Caco-2 (cell line): ENCODE measurements at regions of chr1 and their contacts with region 1.

Region 1: DNA sequence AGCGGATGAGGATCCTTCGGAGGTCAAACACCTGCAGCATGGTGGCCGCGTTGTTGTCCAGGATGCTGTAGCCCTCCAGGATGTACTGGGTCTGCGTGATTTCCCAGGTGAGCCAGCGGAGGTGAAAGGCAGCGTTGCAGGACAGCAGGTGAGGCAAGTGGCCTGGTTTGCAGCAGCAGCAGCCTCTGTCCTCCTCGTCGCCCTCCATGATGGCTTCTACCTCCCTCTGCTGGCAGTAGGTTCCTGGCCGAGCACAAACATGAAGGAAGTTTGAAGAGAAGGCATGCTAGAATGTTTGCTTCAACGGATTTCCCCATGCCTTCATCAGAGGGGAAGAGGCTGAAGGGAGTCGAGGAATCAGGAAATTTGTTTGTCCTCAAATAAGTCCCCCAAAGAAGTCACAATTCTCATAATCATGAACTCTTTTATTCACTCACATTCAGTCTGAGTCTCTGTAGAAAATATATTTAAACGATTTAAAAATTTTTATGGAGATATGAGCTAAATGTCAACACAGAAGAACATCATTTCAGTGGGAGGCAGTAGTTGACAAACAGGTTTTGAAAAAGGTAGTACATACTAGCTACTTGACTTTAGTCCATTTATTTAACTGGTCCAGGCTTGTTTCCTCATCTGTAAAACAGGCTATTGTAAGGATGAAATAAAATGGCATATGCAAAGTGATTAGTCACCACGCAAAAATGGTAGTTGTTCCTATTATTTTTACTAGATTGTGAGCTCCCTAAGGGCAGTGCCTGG is 74.9 kb downstream of the NTPCR start:
- DNase-seq: peak; percentile 82 to 83
- H3K4me3 ChIP-seq: no peak overlapping the region
- H3K4me3 Mint-ChIP-seq: no peak overlapping the region
- H3K27ac Mint-ChIP-seq: no peak overlapping the region
- H3K4me1 ChIP-seq: peaks cover 6% of the 10 kb centered on the region; the same call in 1 of the 2 replicates
- H3K4me1 Mint-ChIP-seq: peaks cover 23% of the 10 kb centered on the region
- H3K27me3 ChIP-seq: no peaks in the 10 kb centered on the region
- H3K27me3 Mint-ChIP-seq: peaks cover 7% of the 10 kb centered on the region
- CTCF ChIP-seq: peak; percentile 74 to 94

Region 2: GRCh38 chr1:232635778-232636356 is 389.5 kb before region 1 on chr1:
- CTCF ChIA-PET with region 1: no interaction called
- POLR2A ChIA-PET with region 1: no interaction called
- intact Hi-C with region 1: loop called (anchors 1 kb)
- DNase-seq: peak in 1 of 2 experiments; percentile 23
- H3K4me3 ChIP-seq: no peak overlapping the region
- H3K4me3 Mint-ChIP-seq: no peak overlapping the region
- H3K27ac Mint-ChIP-seq: no peak overlapping the region
- H3K4me1 ChIP-seq: peaks cover 5% of the 10 kb centered on the region; the same call in 1 of the 2 replicates
- H3K4me1 Mint-ChIP-seq: no peaks in the 10 kb centered on the region
- H3K27me3 ChIP-seq: no peaks in the 10 kb centered on the region; the same call in 1 of the 2 replicates
- H3K27me3 Mint-ChIP-seq: no peaks in the 10 kb centered on the region
- CTCF ChIP-seq: peak; percentile 63 to 65

Region 3: GRCh38 chr1:232968965-232969364 is 56.4 kb before region 1 on chr1:
- CTCF ChIA-PET with region 1: no interaction called
- POLR2A ChIA-PET with region 1: no interaction called
- intact Hi-C with region 1: loop called (anchors 5 kb)
- DNase-seq: no peak
- H3K4me3 ChIP-seq: no peak overlapping the region
- H3K4me3 Mint-ChIP-seq: no peak overlapping the region
- H3K27ac Mint-ChIP-seq: no peak overlapping the region
- H3K4me1 ChIP-seq: no peaks in the 10 kb centered on the region
- H3K4me1 Mint-ChIP-seq: no peaks in the 10 kb centered on the region
- H3K27me3 ChIP-seq: no peaks in the 10 kb centered on the region
- H3K27me3 Mint-ChIP-seq: no peaks in the 10 kb centered on the region
- CTCF ChIP-seq: no peak

Region 4: GRCh38 chr1:232996143-232996542 is 29.2 kb before region 1 on chr1:
- CTCF ChIA-PET with region 1: interaction called, 3 read pairs
- POLR2A ChIA-PET with region 1: no interaction called
- intact Hi-C with region 1: loop called (anchors 1 kb)
- DNase-seq: peak; percentile 56 to 66
- H3K4me3 ChIP-seq: no peak overlapping the region
- H3K4me3 Mint-ChIP-seq: peak overlapping the region; percentile 9
- H3K27ac Mint-ChIP-seq: peak overlapping the region; percentile 25
- H3K4me1 ChIP-seq: peaks cover 16% of the 10 kb centered on the region
- H3K4me1 Mint-ChIP-seq: peaks cover 14% of the 10 kb centered on the region
- H3K27me3 ChIP-seq: no peaks in the 10 kb centered on the region
- H3K27me3 Mint-ChIP-seq: no peaks in the 10 kb centered on the region
- CTCF ChIP-seq: no peak

Region 5: DNA sequence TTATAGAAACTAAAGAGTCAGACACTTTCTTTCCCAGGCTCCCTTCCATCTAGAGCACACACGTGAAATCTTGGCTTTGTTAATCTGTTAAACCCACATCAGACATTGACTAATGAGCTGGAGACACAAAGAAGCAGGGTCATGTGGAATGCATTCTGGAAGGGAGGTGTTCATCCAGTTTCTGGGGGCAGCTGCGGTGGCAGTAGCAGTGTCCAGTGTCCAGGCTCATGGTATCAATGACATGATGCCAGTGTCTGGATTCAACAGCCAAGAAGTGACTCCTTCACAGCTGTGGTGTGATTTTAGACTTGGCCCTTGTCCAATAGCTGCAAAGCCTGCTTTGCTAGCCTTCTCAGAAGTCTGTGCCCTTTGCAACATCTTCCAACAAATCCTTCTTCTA is 20.3 kb after region 1 on chr1:
- CTCF ChIA-PET with region 1: no interaction called
- POLR2A ChIA-PET with region 1: no interaction called
- intact Hi-C with region 1: no loop called
- DNase-seq: no peak
- H3K4me3 ChIP-seq: no peak overlapping the region
- H3K4me3 Mint-ChIP-seq: no peak overlapping the region
- H3K27ac Mint-ChIP-seq: no peak overlapping the region
- H3K4me1 ChIP-seq: no peaks in the 10 kb centered on the region
- H3K4me1 Mint-ChIP-seq: no peaks in the 10 kb centered on the region
- H3K27me3 ChIP-seq: no peaks in the 10 kb centered on the region
- H3K27me3 Mint-ChIP-seq: peaks cover 8% of the 10 kb centered on the region
- CTCF ChIP-seq: no peak